ENCODE measurements at regions of chr10 and their contacts with region 1.

Region 1: DNA sequence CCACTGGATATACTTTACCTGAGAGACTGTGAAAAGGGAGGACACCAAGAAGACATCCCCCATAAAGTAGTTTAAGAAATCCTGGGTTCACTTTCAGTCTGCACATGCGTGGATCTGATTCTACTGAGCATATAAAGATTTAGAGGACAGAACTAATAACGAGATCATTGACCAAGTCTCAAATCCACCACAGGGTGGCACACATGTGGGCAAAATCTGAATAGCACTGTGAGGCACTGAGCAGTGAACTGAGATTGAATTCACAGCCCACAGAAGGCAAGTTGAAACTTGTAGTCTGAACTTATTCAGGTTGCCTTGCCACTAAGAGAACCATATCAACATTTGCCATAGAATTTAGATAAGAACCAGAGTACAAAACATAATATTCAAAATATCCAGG is 818.6 kb downstream of the GRID1 start:
- DNase-seq: peak; percentile 86
- H3K4me3 Mint-ChIP-seq: no peak overlapping the region
- H3K27ac Mint-ChIP-seq: no peak overlapping the region
- H3K4me1 Mint-ChIP-seq: peaks cover 23% of the 10 kb centered on the region
- H3K27me3 Mint-ChIP-seq: no peaks in the 10 kb centered on the region
- CTCF ChIP-seq: peak; percentile 43

Region 2: GRCh38 chr10:85477979-85478378 is 70.1 kb before region 1 on chr10:
- CTCF ChIA-PET with region 1: no interaction called
- POLR2A ChIA-PET with region 1: no interaction called
- intact Hi-C with region 1: no loop called
- DNase-seq: no peak
- H3K4me3 Mint-ChIP-seq: no peak overlapping the region
- H3K27ac Mint-ChIP-seq: no peak overlapping the region
- H3K4me1 Mint-ChIP-seq: no peaks in the 10 kb centered on the region
- H3K27me3 Mint-ChIP-seq: no peaks in the 10 kb centered on the region
- CTCF ChIP-seq: no peak

Region 3: DNA sequence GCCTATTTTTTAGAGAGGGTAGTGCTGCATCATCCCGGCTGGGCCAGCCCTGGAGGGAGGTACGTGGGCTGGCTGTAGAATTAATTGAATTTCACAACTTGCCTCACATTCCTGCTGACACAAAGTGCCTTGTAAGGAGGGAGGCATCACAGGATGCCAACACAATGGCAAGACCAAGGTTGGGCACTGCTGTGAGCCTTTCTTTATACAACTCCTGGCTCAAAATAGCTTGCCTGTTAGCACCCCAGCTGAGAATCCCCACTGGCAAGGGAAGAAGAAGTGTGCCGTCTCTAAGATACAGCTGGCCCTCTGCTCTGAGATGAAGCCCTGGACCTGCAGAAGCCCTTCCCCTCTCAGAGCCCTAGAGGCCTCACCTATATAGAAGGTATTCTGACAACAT is 55.4 kb before region 1 on chr10:
- CTCF ChIA-PET with region 1: no interaction called
- POLR2A ChIA-PET with region 1: no interaction called
- intact Hi-C with region 1: no loop called
- DNase-seq: peak; percentile 22
- H3K4me3 Mint-ChIP-seq: no peak overlapping the region
- H3K27ac Mint-ChIP-seq: no peak overlapping the region
- H3K4me1 Mint-ChIP-seq: peaks cover 6% of the 10 kb centered on the region
- H3K27me3 Mint-ChIP-seq: no peaks in the 10 kb centered on the region
- CTCF ChIP-seq: no peak

Region 4: DNA sequence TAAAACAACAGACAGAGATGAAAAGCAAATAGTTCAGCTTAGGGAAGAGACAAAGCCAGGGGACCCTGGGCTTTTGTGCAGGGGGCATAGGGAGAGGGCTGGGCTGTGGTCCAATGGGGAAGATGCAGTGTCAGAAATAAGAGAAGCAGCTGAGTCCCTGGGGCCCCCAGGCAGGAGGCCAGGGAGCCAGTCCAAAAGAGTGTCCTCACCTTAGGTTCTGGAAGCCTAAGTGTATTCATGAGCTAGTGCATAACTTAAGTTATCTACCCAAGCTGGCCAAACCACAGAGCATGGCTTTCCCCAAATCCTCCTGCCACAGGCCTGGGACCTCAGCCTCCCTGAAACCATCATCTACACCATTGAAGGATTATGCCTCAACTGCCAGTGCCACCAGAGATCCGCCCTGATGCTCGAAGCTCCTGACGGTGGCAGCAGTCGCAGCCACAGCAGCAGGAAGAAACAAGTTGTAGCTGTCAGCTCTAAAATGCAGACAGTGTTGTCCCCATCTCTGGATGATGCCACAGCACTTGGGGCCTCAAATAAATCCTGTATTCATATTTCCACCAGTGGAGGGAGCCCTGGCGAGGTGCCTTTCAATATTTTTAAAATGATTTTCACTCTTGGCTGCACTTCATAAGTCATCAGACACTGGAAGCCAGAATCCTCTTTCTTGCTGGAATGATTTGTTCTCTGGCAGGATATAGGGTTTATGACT is 243.9 kb after region 1 on chr10:
- CTCF ChIA-PET with region 1: no interaction called
- POLR2A ChIA-PET with region 1: no interaction called
- intact Hi-C with region 1: loop called (anchors 5 kb)
- DNase-seq: peak; percentile 32
- H3K4me3 Mint-ChIP-seq: no peak overlapping the region
- H3K27ac Mint-ChIP-seq: no peak overlapping the region
- H3K4me1 Mint-ChIP-seq: no peaks in the 10 kb centered on the region
- H3K27me3 Mint-ChIP-seq: no peaks in the 10 kb centered on the region
- CTCF ChIP-seq: no peak

Region 5: DNA sequence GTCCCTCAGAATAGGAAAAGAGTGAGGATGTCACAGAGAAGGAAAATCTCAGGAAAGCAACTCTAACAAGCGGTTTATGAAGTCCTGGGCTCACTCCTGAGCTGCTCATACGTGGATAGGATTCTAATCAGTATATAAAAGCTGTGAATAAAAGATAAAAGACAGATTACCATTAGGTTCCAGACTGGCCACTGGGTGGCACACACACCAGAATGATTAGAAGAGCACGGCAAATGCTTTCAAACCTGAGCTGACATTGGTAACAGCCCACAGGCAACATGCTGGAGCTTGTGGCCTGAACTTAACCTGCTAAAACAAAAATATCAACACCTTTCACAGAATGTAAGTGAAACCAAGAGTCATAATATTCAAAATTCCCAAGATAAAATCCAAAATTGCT is 447.8 kb after region 1 on chr10:
- CTCF ChIA-PET with region 1: no interaction called
- POLR2A ChIA-PET with region 1: no interaction called
- intact Hi-C with region 1: loop called (anchors 10 kb)
- DNase-seq: peak; percentile 57
- H3K4me3 Mint-ChIP-seq: no peak overlapping the region
- H3K27ac Mint-ChIP-seq: no peak overlapping the region
- H3K4me1 Mint-ChIP-seq: no peaks in the 10 kb centered on the region
- H3K27me3 Mint-ChIP-seq: no peaks in the 10 kb centered on the region
- CTCF ChIP-seq: no peak

Region 6: DNA sequence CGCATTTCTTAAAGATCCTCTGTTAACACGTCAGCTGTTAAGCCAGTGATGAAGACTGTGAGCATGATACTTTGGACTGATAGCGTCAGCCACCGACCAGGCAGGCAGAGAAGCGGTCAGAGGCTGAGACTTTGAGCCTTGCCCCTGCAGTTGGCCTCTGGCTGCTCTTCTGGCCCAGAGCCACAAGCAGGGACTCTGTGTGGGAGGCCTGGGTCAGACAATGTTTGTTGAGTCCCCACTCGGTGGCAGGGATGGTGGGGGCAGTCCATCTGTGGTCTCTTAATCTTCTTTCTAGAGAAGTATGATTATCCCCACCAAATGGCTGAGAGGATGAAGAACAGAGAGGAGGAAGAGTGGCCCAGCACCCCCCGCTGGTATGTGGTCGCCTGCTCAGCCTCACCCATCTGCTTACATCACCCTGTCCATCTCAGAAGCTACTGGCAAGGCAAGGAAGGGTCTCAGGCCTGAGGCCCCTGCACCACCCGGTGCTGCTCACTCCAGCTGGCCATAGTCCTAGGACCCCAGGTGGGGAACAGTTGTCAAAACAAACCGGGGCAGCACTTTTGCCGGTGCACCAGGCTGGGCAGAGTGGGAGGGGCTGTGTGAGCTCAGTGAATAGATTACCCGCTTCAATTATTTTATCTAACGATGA is 615.6 kb after region 1 on chr10:
- CTCF ChIA-PET with region 1: no interaction called
- POLR2A ChIA-PET with region 1: no interaction called
- intact Hi-C with region 1: loop called (anchors 10 kb)
- DNase-seq: no peak
- H3K4me3 Mint-ChIP-seq: no peak overlapping the region
- H3K27ac Mint-ChIP-seq: no peak overlapping the region
- H3K4me1 Mint-ChIP-seq: no peaks in the 10 kb centered on the region
- H3K27me3 Mint-ChIP-seq: no peaks in the 10 kb centered on the region
- CTCF ChIP-seq: no peak

Region 7: DNA sequence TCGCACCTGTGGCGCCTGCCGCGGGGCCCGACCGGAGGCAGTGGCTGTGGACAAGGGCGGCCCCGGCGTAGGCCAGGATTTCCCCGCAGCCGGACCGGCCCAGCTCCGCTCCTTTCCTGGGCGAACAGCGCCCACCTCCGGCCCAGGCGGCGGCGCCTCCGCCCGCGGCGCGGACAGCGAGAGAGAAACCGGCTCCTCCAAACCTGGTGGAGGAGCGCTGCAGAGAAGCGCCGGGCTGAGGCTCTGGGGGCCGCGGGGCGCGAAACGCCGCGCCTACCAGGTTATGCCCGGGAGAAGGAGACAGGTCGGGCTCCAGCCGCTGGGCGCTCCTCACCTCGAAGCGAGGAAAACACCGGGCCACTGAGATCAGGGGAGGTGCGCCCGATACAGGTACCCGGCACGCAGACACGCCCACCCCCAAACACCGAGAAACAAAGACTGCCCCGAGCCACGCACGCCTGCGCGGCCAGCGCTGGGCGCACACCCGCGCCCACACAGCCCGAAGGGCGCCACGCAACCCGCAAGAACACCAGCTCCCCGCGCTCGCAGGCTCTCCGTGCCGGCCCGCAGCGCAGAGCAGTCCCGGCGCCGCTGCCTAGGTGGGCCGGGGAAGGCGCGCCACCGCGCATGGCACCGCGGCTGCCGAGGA is 815.3 kb after region 1 on chr10:
- CTCF ChIA-PET with region 1: interaction called, 3 read pairs
- POLR2A ChIA-PET with region 1: no interaction called
- intact Hi-C with region 1: loop called (anchors 1 kb)
- DNase-seq: no peak
- H3K4me3 Mint-ChIP-seq: peak overlapping the region; percentile 38
- H3K27ac Mint-ChIP-seq: no peak overlapping the region
- H3K4me1 Mint-ChIP-seq: peaks cover 6% of the 10 kb centered on the region
- H3K27me3 Mint-ChIP-seq: peaks cover 32% of the 10 kb centered on the region
- CTCF ChIP-seq: peak; percentile 52